Activated CD4-positive, alpha-beta memory T cell treated with anti-CD3 and anti-CD28 coated beads for 36 hours (primary cell): ENCODE measurements at regions of chr12 and their contacts with region 1.

Region 1: DNA sequence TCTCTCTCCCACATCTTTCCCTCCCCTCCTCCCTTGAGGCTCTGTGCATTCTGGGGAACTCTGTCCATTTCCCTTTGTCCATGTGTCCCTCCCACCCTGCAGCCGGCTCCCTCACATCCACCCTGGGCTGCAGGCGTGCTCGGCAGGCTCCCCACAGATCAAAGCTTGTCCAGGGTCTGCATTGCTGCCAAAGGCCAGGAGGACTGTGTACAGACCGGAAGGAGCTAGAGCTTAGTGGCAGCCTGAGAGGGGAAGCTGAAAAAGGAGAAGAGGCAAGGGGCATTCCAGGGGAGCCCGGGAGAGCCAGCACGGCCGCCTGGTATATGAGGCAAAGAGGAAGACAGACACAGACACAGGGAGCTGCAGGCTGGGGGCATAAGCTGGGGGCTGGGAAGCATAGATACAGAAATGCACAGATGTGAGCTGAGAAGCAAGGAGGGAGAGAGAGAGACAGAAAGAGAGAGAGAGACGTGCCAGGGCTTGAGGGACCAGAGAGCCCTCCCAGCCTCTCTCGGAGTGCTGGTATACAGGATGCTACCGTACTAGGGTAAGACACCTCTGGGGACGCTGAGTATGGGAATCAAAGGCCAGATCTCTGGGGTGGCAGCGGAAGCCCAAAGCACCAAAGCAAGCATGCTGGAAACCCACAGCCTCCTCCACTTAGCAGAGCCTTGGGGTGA is 3.3 kb downstream of the CD4 start:
- DNase-seq: peak; percentile 55
- H3K4me3 Mint-ChIP-seq: peak overlapping the region; percentile 91
- H3K27ac Mint-ChIP-seq: peak overlapping the region; percentile 95
- H3K4me1 Mint-ChIP-seq: peaks cover 54% of the 10 kb centered on the region
- H3K27me3 Mint-ChIP-seq: no peaks in the 10 kb centered on the region

Region 2: GRCh38 chr12:6493497-6494257 is 299.0 kb before region 1 on chr12 and contains the start of gene NCAPD2:
- CTCF ChIA-PET with region 1: no interaction called
- POLR2A ChIA-PET with region 1: no interaction called
- intact Hi-C with region 1: no loop called
- DNase-seq: peak; percentile 98
- H3K4me3 Mint-ChIP-seq: peak within 1 kb of the TSS; percentile 94
- H3K27ac Mint-ChIP-seq: peak within 1 kb of the TSS; percentile 100
- H3K4me1 Mint-ChIP-seq: peaks cover 38% of the 10 kb centered on the region
- H3K27me3 Mint-ChIP-seq: no peaks in the 10 kb centered on the region
- total RNA-seq, gene NCAPD2: 192 to 196 TPM

Region 3: DNA sequence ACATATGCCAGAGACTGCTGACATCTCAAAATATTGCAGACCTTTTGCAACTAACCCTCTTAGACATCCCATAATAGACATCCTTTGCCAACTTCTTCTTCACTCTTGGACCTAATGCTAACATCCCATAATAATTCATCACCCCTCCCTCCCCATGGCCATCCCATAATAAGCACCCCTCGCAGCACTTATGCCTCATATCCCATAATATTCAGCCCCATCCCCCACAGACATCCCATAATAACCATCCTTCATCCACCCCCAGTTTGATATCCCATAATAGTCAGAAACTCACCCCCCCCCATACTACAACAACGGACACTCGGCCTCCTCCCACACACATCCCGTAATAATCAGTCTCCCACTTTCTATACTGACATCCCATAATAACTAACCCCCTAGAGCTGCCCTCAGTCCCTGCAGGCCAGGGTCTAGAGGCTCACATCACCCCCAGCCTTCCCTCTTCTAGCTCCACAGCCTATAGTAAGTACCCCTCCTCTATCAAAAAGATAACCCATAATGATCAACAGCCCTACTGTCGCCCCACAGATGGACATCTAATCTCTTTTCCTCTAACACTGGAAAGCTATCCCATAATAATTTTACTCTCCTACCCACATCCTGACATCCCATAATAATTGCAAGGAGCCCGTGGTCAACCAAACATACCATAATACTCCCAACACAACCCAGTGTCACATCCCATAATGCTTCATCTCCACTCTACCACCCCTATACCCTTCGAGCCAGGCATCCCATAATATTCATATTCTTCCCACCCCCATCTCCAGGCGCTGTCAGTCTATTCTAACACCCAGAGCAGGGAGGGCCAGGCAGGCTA is 184.7 kb before region 1 on chr12:
- CTCF ChIA-PET with region 1: no interaction called
- POLR2A ChIA-PET with region 1: no interaction called
- intact Hi-C with region 1: loop called (anchors 5 kb)
- DNase-seq: peak; percentile 82
- H3K4me3 Mint-ChIP-seq: no peak overlapping the region
- H3K27ac Mint-ChIP-seq: no peak overlapping the region
- H3K4me1 Mint-ChIP-seq: peaks cover 53% of the 10 kb centered on the region
- H3K27me3 Mint-ChIP-seq: no peaks in the 10 kb centered on the region

Region 4: GRCh38 chr12:6764011-6764828 is 28.4 kb before region 1 on chr12:
- CTCF ChIA-PET with region 1: interaction called, 47 read pairs
- POLR2A ChIA-PET with region 1: interaction called, 19 read pairs
- intact Hi-C with region 1: loop called (anchors 1 kb)
- DNase-seq: peak; percentile 72
- H3K4me3 Mint-ChIP-seq: peak overlapping the region; percentile 40
- H3K27ac Mint-ChIP-seq: no peak overlapping the region
- H3K4me1 Mint-ChIP-seq: peaks cover 29% of the 10 kb centered on the region
- H3K27me3 Mint-ChIP-seq: peaks cover 24% of the 10 kb centered on the region

Region 5: GRCh38 chr12:6778574-6779550 is 13.8 kb before region 1 on chr12:
- CTCF ChIA-PET with region 1: interaction called, 16 read pairs
- POLR2A ChIA-PET with region 1: interaction called, 19 read pairs
- intact Hi-C with region 1: loop called (anchors 1 kb)
- DNase-seq: peak; percentile 94
- H3K4me3 Mint-ChIP-seq: peak overlapping the region; percentile 67
- H3K27ac Mint-ChIP-seq: peak overlapping the region; percentile 46
- H3K4me1 Mint-ChIP-seq: peaks cover 77% of the 10 kb centered on the region
- H3K27me3 Mint-ChIP-seq: no peaks in the 10 kb centered on the region

Region 6: GRCh38 chr12:7047306-7047705 is 254.6 kb after region 1 on chr12:
- CTCF ChIA-PET with region 1: no interaction called
- POLR2A ChIA-PET with region 1: no interaction called
- intact Hi-C with region 1: no loop called
- DNase-seq: no peak
- H3K4me3 Mint-ChIP-seq: no peak overlapping the region
- H3K27ac Mint-ChIP-seq: no peak overlapping the region
- H3K4me1 Mint-ChIP-seq: peaks cover 7% of the 10 kb centered on the region
- H3K27me3 Mint-ChIP-seq: no peaks in the 10 kb centered on the region